Breast epithelium (tissue), 4 donors: ENCODE measurements at regions of chr7 and their contacts with region 1.

Region 1: GRCh38 chr7:150463461-150463860 is 13.0 kb downstream of the GIMAP8 start:
- DNase-seq: no peak
- H3K4me3 ChIP-seq: no peak overlapping the region
- H3K27ac ChIP-seq: no peak overlapping the region
- H3K4me1 ChIP-seq: no peaks in the 10 kb centered on the region
- H3K27me3 ChIP-seq: no peaks in the 10 kb centered on the region
- CTCF ChIP-seq: no peak
- POLR2A ChIP-seq: no peak

Region 2: DNA sequence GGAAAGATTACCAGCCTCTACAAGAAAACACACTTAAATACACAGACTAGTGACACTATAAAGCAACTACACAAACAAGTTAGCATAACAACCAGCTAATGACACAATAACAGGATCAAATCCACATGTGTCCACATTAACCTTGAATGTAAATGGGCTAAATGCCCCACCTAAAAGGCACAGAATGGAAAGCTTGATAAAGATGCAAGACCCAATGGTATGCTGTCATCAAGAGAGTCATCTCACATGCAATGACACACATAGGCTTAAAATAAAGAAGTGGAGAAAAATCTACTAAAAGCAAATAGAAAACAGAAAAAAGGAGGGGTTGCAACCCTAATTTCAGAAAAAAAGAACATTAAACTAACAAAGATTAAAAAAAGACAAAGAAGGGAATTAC is 89.7 kb after region 1 on chr7:
- intact Hi-C with region 1: loop called (anchors 5 kb)
- DNase-seq: no peak
- H3K4me3 ChIP-seq: no peak overlapping the region
- H3K27ac ChIP-seq: no peak overlapping the region
- H3K4me1 ChIP-seq: no peaks in the 10 kb centered on the region
- H3K27me3 ChIP-seq: no peaks in the 10 kb centered on the region
- CTCF ChIP-seq: no peak
- POLR2A ChIP-seq: no peak

Region 3: GRCh38 chr7:150610233-150610632 is 146.8 kb after region 1 on chr7:
- intact Hi-C with region 1: no loop called
- DNase-seq: no peak
- H3K4me3 ChIP-seq: no peak overlapping the region
- H3K27ac ChIP-seq: no peak overlapping the region
- H3K4me1 ChIP-seq: no peaks in the 10 kb centered on the region
- H3K27me3 ChIP-seq: no peaks in the 10 kb centered on the region
- CTCF ChIP-seq: no peak
- POLR2A ChIP-seq: no peak

Region 4: DNA sequence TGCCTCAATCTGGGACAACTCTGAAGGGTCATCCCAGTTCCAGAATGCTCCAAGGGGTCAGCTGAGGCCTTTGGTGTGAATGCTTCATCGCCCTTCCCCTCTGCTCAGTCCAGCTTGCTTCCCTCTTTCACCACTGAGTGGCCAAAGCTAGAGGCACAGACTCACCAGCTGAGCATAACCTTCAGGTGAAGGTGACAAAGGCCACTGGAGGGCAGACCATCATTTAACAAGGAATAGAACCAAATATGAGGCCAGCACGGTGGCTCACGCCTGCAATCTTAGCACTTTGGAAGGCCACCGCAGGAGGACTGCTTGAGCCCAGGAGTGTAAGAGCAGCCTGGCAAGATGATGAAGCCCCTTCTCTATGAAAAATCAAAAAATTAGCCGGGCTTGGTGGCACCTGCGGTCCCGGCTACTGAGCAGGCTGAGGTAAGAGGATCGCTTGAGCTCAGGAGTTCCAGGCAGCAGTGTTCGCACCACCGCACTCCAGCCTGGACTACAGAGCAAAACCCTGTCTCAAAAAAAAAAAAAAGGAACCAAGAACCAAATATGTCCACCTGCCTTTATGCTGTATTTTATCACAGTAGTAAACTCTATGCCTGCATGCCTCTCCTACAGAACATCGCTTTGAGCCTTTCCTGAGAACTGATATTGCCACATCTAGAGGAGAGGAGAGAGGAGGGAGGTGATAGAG is 1400.1 kb after region 1 on chr7:
- intact Hi-C with region 1: no loop called
- DNase-seq: no peak
- H3K4me3 ChIP-seq: no peak overlapping the region
- H3K27ac ChIP-seq: no peak overlapping the region
- H3K4me1 ChIP-seq: peaks cover 0 to 8% of the 10 kb centered on the region in 2 donors
- H3K27me3 ChIP-seq: no peaks in the 10 kb centered on the region
- CTCF ChIP-seq: no peak
- POLR2A ChIP-seq: no peak